ENCODE measurements at regions of chr4 and their contacts with region 1.

Region 1: DNA sequence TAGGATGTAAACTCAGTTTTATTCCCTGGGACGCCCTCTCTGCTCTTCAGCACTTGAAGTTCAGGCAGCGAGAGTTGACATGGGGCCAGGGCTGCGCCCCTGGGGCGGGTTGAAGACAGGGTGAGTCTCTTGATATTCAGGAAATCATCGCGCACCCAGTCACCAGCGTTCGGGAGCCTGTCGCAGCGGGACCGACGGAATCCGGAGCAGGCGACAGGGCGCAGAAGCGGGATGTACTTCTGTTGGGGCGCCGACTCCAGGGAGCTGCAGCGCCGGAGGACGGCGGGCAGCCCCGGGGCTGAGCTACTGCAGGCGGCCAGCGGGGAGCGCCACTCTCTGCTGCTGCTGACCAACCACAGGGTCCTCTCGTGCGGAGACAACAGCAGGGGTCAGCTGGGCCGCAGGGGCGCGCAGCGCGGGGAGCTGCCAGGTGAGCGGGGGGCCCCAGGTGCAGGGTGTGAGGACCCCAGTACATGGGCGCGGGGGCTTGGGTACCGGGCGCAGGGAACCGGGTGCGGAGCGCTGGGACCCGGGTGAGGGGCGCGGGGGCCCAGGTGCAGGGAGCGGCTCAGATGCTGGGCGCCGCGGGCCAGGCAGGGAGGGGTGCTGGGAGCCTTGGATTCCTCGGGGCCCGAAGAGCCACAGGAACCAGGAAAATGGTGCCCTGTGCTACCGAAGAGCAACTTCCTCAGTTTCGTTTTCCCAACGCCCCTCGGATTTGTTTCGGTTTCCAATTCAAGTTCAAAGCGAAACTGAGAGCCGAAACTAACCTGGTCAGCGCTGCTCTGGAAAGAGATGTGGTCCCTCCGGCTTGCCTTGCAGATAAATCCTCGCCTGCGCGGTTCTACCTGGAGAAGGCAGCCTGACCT is at the start of gene HERC6:
- DNase-seq: peak; percentile 19
- H3K4me3 ChIP-seq: peak within 1 kb of the TSS; percentile 66
- H3K27me3 ChIP-seq: no peaks in the 10 kb centered on the region
- CTCF ChIP-seq: peak; percentile 82
- polyA plus RNA-seq, gene HERC6: 3.1 and 4.1 TPM in 2 replicates

Region 2: DNA sequence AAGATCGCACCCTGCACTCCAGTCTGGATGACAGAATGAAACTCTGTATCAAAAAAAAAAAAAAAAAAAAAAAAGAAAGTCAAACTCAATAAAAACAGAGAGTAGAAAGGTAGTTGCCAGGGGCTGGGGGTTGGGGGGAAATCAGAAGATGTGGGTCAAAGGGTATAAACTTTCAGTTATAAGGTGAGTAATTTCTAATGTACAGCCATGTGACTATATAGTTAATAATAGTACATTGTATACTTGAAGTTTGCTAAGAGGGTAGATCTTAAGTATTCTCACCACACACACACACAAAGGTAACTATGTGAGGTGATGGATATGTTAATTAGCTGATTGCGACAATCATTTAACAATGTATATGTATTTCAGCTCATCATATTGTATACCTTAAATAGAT is 11.2 kb after region 1 on chr4:
- CTCF ChIA-PET with region 1: interaction called, 10 read pairs
- POLR2A ChIA-PET with region 1: no interaction called
- DNase-seq: no peak
- H3K4me3 ChIP-seq: no peak overlapping the region
- H3K27me3 ChIP-seq: no peaks in the 10 kb centered on the region
- CTCF ChIP-seq: no peak

Measured in BJ (cell line).